CD4-positive, alpha-beta memory T cell (primary cell): ENCODE measurements at regions of chr3 and their contacts with region 1.

Region 1: DNA sequence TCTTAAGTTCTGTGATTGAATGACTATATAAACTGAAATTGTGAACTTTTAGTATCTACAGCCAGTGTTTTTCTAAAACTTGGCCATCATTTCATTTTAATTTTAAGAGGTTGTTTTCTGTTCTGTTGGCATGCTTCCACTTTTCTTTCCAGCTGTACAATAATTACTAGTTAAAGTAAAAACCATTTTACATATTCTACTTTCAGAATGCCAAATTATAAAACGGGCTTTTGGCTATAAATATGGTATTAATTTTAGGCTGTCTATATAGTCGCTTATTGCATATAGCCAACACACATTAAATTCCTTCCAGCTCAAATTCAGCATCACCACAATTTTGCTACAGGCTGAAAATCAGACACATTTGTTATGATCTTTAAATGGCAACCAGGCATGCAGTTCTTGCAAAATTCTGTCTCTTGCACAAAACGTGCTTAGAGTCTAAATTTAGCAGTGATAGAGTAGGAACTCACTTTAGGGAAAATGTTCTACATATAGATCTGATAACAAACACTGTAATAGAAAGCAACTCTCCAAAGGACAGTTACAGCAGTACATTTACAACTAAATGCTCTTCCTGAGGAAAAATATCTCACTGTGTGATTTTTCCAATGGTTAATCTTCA is 81.1 kb downstream of the BTD start:
- DNase-seq: no peak
- H3K4me3 ChIP-seq: no peak overlapping the region
- H3K4me3 Mint-ChIP-seq: no peak overlapping the region
- H3K27ac ChIP-seq: no peak overlapping the region
- H3K27ac Mint-ChIP-seq: no peak overlapping the region
- H3K4me1 ChIP-seq: no peaks in the 10 kb centered on the region
- H3K4me1 Mint-ChIP-seq: peaks cover 0 to 7% (median 5%) of the 10 kb centered on the region in 4 donors
- H3K27me3 ChIP-seq: no peaks in the 10 kb centered on the region
- H3K27me3 Mint-ChIP-seq: no peaks in the 10 kb centered on the region

Region 2: DNA sequence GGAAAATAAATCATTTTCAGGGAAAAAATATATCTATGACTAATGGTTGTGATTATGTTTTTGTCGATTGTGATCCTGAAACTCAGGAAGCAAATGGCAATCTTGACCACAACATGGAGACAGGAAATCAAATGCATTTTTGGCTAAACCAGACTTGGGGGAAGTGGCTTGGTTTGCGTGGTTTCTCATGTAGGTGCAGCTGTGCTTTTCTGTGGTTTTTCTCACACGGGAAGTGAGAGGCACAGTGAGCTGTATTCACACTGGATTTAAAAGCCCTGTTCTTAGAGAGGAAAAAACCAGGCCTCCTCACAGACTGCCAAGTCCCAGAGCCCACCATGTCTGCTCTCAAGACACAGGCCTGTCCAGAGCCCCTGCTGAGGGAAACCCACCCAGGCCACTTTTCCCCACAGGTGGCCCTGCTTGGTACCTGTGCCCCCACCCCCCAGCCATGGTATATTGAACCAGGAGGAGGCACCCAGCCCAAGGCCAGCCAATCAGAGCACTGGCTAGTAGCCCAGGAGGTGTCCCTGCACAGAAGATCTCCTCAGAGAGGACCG is 35.0 kb before region 1 on chr3:
- CTCF ChIA-PET with region 1: no interaction called
- POLR2A ChIA-PET with region 1: interaction called, 6 read pairs
- intact Hi-C with region 1: loop called (anchors 5 kb)
- DNase-seq: peak; percentile 62 to 74 (median 70)
- H3K4me3 ChIP-seq: no peak overlapping the region
- H3K4me3 Mint-ChIP-seq: peak overlapping the region; percentile 58 to 88 (median 78)
- H3K27ac ChIP-seq: no peak overlapping the region
- H3K27ac Mint-ChIP-seq: peak overlapping the region; percentile 36 to 84 (median 76)
- H3K4me1 ChIP-seq: peaks cover 45% of the 10 kb centered on the region
- H3K4me1 Mint-ChIP-seq: peaks cover 34 to 55% (median 47%) of the 10 kb centered on the region in 4 donors
- H3K27me3 ChIP-seq: no peaks in the 10 kb centered on the region
- H3K27me3 Mint-ChIP-seq: peaks cover 0 to 5% of the 10 kb centered on the region in 2 donors